ENCODE measurements at regions of chr13 and their contacts with region 1.

Region 1: GRCh38 chr13:75482070-75482819 is at the start of gene TBC1D4:
- DNase-seq: peak; percentile 87 to 88
- ATAC-seq: peak; percentile 65 to 69
- H3K4me3 ChIP-seq: peak within 1 kb of the TSS; percentile 85 to 95 (median 94)
- H3K27ac ChIP-seq: peak within 1 kb of the TSS; percentile 90 to 98 (median 93)
- H3K4me1 ChIP-seq: peaks cover 22 to 47% of the 10 kb centered on the region in 2 donors
- H3K27me3 ChIP-seq: no peaks in the 10 kb centered on the region
- CTCF ChIP-seq: peak; percentile 68 to 93 (median 74)
- POLR2A ChIP-seq: peak; percentile 66 to 84
- total RNA-seq, gene TBC1D4: 49.9 to 279 (median 211) TPM

Region 2: DNA sequence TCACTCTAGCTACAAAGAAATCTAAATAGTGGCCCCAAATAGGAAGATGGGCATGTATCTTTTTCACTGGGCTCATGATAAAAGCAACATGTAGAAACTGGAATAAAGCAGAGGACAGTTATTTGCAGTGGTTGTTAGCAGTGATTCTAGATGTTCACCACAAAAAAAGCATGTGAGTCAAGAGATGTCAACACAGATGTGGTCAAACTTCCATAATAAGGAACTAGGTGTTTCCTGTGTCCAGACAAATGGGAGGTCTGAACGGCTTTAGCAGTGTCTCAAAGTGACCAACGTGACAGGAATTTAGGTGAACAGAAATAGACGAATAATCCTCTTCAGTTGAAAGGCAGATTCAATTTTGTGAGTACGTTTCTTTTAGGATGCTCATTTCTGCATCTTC is 163.0 kb before region 1 on chr13:
- in situ Hi-C with region 1: no loop called
- intact Hi-C with region 1: loop called (anchors 5 kb)
- DNase-seq: peak; percentile 29 to 34
- ATAC-seq: peak; percentile 95 to 99
- H3K4me3 ChIP-seq: no peak overlapping the region
- H3K27ac ChIP-seq: peak overlapping the region; percentile 50 to 72 (median 66)
- H3K4me1 ChIP-seq: peaks cover 32 to 39% of the 10 kb centered on the region in 2 donors
- H3K27me3 ChIP-seq: no peaks in the 10 kb centered on the region
- CTCF ChIP-seq: no peak
- POLR2A ChIP-seq: no peak

Region 3: DNA sequence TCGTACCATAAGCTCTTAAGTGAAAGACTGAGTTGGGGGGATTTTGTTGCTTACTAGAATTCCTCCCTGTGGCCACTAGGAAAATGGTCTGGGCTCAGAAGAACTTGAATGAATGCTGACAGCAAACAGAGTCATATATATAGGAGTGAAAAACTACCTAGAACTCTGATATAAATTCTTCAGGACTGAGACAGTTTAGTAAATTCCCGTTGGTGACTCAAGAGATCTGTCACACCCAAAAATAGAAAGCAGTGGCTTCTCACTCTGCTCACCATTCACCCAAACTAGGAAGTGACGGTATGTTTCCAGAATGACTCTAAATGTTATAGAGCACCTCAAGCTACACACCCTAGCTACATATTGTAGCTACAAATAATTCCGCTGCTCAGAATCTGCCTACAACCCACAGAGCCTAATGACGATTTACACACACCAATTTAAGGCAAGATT is 116.5 kb before region 1 on chr13:
- in situ Hi-C with region 1: loop called in 3 of 4 experiments (anchors 5 kb)
- intact Hi-C with region 1: loop called (anchors 1 kb)
- DNase-seq: no peak
- ATAC-seq: peak; percentile 88
- H3K4me3 ChIP-seq: peak overlapping the region; percentile 1 to 41 (median 32)
- H3K27ac ChIP-seq: peak overlapping the region; percentile 78 to 89 (median 84)
- H3K4me1 ChIP-seq: peaks cover 82 to 84% of the 10 kb centered on the region in 2 donors
- H3K27me3 ChIP-seq: no peaks in the 10 kb centered on the region
- CTCF ChIP-seq: peak in 1 of 5 experiments; percentile 48
- POLR2A ChIP-seq: no peak

Region 4: DNA sequence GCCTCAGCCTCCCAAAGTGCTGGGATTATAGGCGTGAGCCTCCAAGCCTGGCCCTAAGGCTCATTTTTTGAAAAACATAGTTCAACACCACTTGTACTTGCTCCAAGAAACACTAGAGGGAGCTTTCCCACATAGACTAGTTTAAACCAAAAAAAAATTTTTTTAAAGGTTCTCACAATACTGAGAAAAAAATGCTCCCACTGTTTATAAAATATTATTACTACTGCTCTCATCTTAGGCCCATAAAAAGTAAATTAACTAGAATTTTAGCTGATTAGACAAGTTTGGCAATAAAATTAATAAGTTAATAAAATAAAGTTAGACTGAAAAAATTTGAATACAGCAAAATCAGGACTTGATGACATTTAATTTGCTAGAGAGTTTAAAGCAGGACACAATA is 109.7 kb before region 1 on chr13:
- in situ Hi-C with region 1: loop called in 3 of 4 experiments (anchors 5 kb)
- intact Hi-C with region 1: loop called (anchors 1 kb)
- DNase-seq: no peak
- ATAC-seq: peak; percentile 40 to 45
- H3K4me3 ChIP-seq: peak overlapping the region in 2 of 4 donors; percentile 0 to 37
- H3K27ac ChIP-seq: peak overlapping the region; percentile 75 to 89 (median 80)
- H3K4me1 ChIP-seq: peaks cover 76 to 84% of the 10 kb centered on the region in 2 donors
- H3K27me3 ChIP-seq: no peaks in the 10 kb centered on the region
- CTCF ChIP-seq: peak; percentile 67 to 76 (median 70)
- POLR2A ChIP-seq: no peak

Region 5: DNA sequence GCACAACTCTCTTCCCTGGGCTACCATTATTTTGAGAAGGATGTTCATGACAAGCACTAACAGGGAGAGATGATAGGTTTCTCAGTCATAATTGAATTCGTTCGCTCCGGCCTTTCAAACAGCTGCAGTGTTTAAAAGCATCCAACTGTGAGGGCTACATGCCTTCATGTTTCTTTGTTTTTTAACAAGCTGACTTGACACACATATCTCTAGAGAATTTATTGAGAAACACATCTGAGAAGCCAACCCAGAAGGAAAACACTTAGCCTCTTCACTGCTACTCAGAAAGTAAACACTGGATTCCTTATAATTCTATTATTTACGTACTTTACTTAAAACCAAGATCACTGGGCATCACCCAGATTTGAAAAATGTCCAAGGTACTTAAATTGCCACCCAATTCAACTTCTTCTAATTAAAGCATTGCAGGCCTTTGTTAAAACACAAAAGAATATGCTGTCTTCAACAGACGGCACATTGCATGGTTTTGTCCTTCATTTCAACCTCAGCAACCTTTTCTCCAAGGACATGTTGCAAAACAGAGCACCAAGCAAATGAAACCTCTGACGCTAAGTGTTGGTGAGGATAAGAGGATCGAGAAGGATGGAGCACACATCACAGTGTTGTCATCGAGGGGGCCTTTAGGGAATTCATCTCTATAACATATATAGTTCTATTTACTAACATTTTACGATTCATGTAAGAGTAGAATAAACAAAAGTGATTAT is 76.1 kb before region 1 on chr13:
- in situ Hi-C with region 1: no loop called
- intact Hi-C with region 1: loop called (anchors 2 kb)
- DNase-seq: no peak
- ATAC-seq: peak; percentile 21 to 26
- H3K4me3 ChIP-seq: no peak overlapping the region
- H3K27ac ChIP-seq: peak overlapping the region; percentile 80 to 89 (median 87)
- H3K4me1 ChIP-seq: peaks cover 69 to 73% of the 10 kb centered on the region in 2 donors
- H3K27me3 ChIP-seq: no peaks in the 10 kb centered on the region
- CTCF ChIP-seq: no peak
- POLR2A ChIP-seq: no peak

Region 6: DNA sequence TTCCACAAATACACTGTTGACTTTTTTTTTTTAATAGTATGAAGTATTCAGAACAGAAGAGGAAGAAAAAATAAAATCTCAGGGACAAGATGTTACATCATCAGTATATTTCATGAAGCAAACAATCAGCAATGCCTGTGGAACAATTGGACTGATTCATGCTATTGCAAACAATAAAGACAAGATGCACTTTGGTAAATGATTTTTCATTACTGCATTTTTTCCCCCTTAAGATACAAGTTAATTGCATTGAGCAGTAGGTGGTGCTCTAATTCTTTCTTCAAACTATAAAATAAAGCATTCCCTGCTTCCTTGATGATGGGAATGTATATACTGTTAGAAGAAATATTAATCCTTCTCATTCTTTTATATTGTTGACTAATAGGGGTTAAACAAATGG is 84.4 kb after region 1 on chr13:
- in situ Hi-C with region 1: no loop called
- intact Hi-C with region 1: no loop called
- DNase-seq: no peak
- ATAC-seq: no peak
- H3K4me3 ChIP-seq: no peak overlapping the region
- H3K27ac ChIP-seq: no peak overlapping the region
- H3K4me1 ChIP-seq: no peaks in the 10 kb centered on the region
- H3K27me3 ChIP-seq: no peaks in the 10 kb centered on the region
- CTCF ChIP-seq: peak in 1 of 5 experiments; percentile 16
- POLR2A ChIP-seq: no peak